ENCODE measurements at regions of chr16 and their contacts with region 1.

Region 1: DNA sequence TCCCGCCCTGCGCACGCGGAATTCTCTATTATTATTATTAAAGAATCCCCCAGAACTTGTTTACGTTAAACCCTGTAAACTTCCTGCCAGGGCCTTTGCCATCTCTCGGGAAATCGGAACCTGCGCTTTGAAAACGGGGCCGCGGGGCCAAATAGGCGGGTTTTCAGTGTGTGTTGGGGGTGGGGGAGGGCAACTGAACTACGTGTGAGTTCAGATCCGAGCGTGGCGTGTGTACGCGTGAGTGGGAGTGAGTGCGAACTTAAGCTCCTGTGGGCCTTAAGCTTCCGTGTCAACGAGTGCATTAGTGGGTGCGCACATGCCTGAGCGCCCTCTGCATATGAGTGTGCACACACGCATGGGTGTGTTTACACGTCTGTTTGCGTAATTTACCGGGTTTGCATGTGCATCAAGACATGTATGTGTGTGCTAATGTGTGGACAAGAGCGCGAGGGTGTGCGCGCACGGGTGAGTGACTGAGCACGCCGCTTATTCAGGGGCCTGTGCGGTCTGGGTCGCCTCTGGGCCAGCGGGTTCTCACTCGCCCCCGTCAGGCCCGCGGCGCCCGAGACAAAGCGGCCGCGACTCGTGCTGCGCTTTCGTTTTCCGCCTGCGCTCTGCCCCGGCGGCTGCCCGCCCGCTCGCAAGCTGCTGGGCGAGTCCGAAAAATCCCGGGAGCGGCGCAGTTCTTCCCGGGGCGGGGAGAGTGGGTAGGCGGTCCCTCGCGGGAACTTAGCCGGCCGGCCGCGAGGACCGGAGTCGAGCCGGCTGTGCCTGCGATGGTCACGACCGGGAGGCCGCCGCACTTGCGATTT is 1.2 kb upstream of the FOXF1 start:
- DNase-seq: peak; percentile 46 to 63 (median 58)
- ATAC-seq: peak; percentile 49
- H3K4me3 ChIP-seq: peak overlapping the region; percentile 24
- H3K4me1 ChIP-seq: peaks cover 7% of the 10 kb centered on the region
- CTCF ChIP-seq: no peak

Region 2: GRCh38 chr16:86300746-86301481 is 208.2 kb before region 1 on chr16:
- intact Hi-C with region 1: loop called in 1 of 2 experiments (anchors 10 kb)
- DNase-seq: no peak
- ATAC-seq: no peak
- H3K4me3 ChIP-seq: no peak overlapping the region
- H3K4me1 ChIP-seq: peaks cover 5% of the 10 kb centered on the region
- CTCF ChIP-seq: no peak

Region 3: DNA sequence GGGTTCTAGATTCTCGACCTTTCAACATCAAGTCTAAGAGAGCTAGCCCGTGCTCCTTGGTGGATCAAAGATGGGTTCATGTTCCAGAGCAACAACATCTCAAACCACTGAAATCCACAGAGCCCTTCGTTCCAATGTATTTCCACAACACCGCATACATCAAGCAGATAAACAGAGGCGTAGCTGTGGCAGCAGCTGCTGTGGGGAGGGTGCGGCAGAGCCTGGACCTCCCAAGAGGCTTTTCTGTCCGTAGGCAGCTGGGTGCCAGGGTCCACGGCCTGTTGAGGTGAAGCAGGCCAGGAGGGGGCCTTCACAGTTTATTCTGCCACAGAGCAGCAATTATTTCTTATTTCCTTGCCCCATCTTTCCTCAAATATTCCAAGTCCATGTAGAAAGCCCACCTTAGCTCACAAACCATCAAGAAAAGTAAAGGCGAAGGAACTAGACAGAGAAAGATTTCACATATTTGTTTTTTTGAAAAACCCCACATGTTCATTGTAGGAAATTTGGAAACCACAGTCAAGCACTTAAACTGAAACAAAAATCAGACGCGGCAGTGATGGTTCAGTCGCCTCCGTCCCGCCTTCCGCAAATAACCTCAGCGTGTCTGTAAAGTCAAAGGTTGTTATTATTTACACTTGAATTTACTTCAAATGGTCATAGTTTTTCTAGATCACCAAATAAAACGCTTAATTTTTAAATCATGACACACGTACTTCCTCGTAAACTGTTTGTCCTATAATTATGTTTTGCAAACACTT is 143.5 kb before region 1 on chr16:
- intact Hi-C with region 1: loop called in 1 of 2 experiments (anchors 5 kb)
- DNase-seq: no peak
- ATAC-seq: no peak
- H3K4me3 ChIP-seq: no peak overlapping the region
- H3K4me1 ChIP-seq: no peaks in the 10 kb centered on the region
- CTCF ChIP-seq: no peak

Region 4: GRCh38 chr16:86432691-86433090 is 76.5 kb before region 1 on chr16:
- intact Hi-C with region 1: loop called in 1 of 2 experiments (anchors 10 kb)
- DNase-seq: peak; percentile 50 to 73 (median 55)
- ATAC-seq: peak; percentile 47
- H3K4me3 ChIP-seq: no peak overlapping the region
- H3K4me1 ChIP-seq: no peaks in the 10 kb centered on the region
- CTCF ChIP-seq: no peak

Region 5: DNA sequence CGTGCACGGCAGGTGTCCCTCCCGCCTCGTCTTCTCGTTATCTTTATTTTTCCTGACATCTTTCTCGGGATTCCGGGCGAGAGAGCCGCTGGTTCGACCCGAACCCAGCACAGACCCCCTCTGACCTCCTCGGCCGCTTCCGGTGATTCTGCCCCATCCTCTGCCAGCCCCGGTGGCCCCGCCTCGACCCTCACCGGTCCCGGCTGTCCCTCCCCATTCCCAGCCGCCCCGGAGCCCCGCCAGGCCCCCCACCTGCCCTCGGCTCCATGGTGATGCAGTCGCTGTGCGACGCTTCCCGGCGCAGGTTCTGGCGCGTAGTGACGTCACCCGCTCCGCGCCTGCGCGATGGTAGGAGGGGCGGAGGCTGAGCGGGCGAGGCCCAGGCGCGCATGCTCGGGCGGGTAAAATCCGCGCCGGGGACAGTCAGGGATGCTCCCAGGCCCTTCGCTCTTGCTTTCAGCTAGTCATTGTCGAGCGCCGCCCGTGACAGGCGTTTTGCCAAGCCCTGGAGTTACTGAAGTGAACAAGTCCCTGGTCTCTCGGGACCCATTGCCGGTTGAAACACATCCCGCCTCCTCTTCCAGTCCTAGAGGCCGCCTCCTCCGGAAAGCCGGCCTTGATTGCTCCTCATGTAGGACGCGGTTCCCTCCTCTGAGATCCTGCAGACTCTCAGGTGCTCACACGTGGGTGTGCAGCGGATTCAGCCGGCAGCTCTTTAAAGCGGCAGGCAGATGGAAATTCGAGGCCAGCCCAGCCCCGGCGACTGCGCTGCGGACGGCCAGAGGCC is 46.0 kb after region 1 on chr16 and contains the start of gene MTHFSD:
- intact Hi-C with region 1: no loop called
- DNase-seq: peak; percentile 94 to 98 (median 94)
- ATAC-seq: peak; percentile 99
- H3K4me3 ChIP-seq: peak within 1 kb of the TSS; percentile 80
- H3K4me1 ChIP-seq: peaks cover 4% of the 10 kb centered on the region
- CTCF ChIP-seq: no peak
- total RNA-seq, gene MTHFSD: 22.6 to 30.4 (median 25.5) TPM